ENCODE measurements at regions of chr19 and their contacts with region 1.

Region 1: DNA sequence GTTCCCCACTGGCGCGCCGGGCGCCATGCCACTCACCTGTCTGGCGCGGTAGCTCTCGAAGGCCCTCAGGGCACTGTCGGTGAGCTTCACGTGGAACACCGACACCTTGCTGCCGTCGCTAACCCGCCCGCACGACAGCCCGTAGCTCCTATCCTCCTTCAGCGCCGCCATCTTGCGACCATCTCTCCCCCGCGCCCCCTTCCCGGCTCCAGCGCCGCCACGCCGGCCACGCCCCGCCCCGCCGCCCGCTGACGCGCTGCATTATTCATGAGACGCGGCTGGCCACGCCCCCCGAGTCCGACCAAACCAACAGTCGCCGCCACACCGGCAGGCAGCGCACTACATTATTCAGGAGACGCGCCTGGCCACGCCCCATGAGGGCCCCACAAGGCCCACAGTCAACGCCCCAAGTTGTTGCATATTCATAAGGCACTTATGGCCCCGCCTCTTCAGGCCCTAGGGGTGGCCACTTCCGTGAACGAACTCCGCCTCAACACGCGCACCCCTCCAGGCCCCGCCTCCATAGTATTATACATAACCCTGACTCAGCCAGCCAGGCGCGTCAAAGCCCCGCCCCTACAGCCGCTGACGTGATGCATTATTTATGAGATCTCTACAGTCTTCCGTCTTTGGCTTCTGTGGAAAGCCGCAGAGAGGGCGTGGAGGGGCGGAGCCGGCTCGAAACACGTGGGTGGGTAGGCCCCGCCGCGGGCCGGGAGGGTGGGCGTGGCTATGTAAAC is at the start of gene ELL:
- DNase-seq: peak; percentile 100
- H3K4me3 ChIP-seq: peak within 1 kb of the TSS; percentile 69 to 97 (median 96)
- H3K27ac ChIP-seq: peak within 1 kb of the TSS; percentile 92
- H3K4me1 ChIP-seq: peaks cover 24% of the 10 kb centered on the region
- H3K27me3 ChIP-seq: no peaks in the 10 kb centered on the region
- CTCF ChIP-seq: peak in 1 of 2 donors; percentile 26
- total RNA-seq, gene ELL: 17.3 to 27.7 TPM

Region 2: DNA sequence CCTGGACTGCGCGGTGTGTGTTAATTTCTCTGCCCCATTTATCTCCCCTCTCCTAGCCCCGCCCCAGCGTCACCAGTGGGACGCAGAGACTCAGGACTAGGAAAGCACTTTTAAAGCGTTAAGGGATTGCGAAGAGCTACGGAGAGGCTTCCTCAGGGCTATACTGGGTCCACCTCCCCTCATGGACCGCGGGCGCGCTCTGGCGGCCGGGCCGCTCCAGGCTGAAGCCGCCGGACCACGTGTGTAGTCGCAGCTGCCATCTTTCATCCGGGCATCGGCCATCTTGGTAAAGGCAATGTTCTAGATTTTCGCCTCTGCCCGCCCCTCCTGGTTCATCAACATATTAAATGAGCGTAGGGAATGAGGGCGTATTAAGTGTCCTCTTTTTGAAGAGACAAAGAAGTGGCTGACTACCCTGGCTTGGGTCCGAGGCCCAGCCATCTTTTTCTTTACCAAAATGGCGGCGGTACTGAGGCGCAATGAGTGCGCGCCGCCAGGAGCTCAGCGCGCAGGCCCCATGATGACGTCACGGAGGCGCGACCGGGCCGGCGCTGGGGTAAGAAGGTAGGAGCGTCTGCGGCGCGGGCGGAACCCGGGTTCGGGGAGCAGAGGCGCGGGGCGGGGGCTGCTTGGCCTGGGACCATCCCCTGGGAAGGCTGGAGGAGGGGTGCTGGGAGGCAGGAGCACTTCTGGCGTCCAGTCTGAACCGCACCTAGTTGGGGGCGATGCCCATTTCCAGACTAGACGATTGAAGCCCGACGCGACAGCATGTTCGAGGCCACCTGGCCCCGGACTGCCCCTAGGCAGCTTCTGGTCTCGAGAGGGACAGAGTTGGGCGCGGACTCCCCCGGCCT is 589.3 kb before region 1 on chr19 and contains the start of gene CCDC124:
- CTCF ChIA-PET with region 1: no interaction called
- dilution Hi-C with region 1: no loop called
- in situ Hi-C with region 1: no loop called
- intact Hi-C with region 1: loop called (anchors 10 kb)
- DNase-seq: peak; percentile 90
- H3K4me3 ChIP-seq: peak within 1 kb of the TSS; percentile 92 to 96 (median 94)
- H3K27ac ChIP-seq: peak within 1 kb of the TSS; percentile 95
- H3K4me1 ChIP-seq: peaks cover 18% of the 10 kb centered on the region
- H3K27me3 ChIP-seq: no peaks in the 10 kb centered on the region
- CTCF ChIP-seq: peak; percentile 92 to 99
- total RNA-seq, gene CCDC124: 20.3 to 100 TPM

Region 3: DNA sequence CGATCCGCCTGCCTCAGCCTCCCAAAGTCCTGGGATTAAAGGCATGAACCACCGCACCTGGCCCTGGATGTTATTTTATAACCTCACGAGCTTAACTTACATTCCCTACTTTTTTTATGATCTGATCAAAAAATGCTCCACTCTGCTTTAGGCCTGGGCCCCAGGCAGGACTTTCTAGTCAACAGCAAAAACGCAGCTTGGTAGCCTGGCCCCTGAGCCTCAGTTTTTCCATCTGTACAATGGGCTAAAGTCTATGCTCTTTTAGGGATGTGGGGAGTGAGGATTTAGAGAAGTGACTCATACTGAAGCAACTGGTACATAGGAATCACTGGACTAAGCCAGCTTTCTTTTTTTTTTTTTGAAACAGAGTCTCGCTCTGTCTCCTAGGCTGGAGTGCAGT is 381.0 kb before region 1 on chr19:
- CTCF ChIA-PET with region 1: no interaction called
- dilution Hi-C with region 1: no loop called
- in situ Hi-C with region 1: no loop called
- intact Hi-C with region 1: no loop called
- DNase-seq: no peak
- H3K4me3 ChIP-seq: no peak overlapping the region
- H3K27ac ChIP-seq: no peak overlapping the region
- H3K4me1 ChIP-seq: no peaks in the 10 kb centered on the region
- H3K27me3 ChIP-seq: no peaks in the 10 kb centered on the region
- CTCF ChIP-seq: no peak

Region 4: DNA sequence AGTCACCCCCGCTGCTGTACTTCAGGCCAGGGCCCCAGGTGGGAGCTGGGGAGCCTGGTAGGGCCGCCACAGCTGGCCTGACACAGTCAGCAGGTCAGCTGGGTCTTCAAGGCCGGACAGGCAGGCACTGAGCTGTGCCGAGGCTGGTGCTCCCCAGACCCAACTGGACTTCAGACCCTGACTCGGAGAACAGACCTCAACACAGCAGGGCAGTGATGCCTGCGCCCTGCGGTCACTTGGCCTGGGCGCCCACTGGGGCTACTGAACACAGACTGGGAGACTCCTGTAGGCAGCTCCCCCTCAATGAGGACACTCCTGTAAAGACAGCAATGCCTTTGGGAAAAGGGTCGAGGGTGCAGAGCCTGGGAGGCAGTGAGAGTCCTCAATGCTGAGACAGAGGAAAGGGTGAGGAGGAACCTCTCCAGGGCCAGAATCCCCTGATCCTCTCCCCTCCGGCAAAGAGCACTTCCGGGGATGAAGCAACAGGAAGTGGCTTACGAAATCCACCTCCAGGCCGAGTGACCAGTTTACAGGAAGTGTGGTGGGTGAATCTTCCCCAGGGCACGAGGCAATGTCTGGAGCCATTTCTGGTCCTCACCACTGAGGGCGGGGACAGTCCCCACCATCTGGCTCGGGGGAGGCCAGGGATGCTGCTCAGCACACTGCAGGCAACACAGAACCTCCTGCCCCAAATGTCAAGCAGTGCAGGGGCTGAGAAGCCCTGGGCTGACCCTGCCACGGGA is 43.3 kb before region 1 on chr19:
- CTCF ChIA-PET with region 1: interaction called, 3 read pairs
- dilution Hi-C with region 1: no loop called
- in situ Hi-C with region 1: no loop called
- intact Hi-C with region 1: loop called (anchors 5 kb)
- DNase-seq: peak; percentile 74
- H3K4me3 ChIP-seq: no peak overlapping the region
- H3K27ac ChIP-seq: peak overlapping the region; percentile 21
- H3K4me1 ChIP-seq: peaks cover 45% of the 10 kb centered on the region
- H3K27me3 ChIP-seq: no peaks in the 10 kb centered on the region
- CTCF ChIP-seq: no peak

Region 5: GRCh38 chr19:18503971-18504885 is 17.8 kb before region 1 on chr19:
- CTCF ChIA-PET with region 1: no interaction called
- dilution Hi-C with region 1: no loop called
- in situ Hi-C with region 1: no loop called
- intact Hi-C with region 1: loop called (anchors 2 kb)
- DNase-seq: no peak
- H3K4me3 ChIP-seq: no peak overlapping the region
- H3K27ac ChIP-seq: no peak overlapping the region
- H3K4me1 ChIP-seq: peaks cover 35% of the 10 kb centered on the region
- H3K27me3 ChIP-seq: no peaks in the 10 kb centered on the region
- CTCF ChIP-seq: no peak

Region 6: DNA sequence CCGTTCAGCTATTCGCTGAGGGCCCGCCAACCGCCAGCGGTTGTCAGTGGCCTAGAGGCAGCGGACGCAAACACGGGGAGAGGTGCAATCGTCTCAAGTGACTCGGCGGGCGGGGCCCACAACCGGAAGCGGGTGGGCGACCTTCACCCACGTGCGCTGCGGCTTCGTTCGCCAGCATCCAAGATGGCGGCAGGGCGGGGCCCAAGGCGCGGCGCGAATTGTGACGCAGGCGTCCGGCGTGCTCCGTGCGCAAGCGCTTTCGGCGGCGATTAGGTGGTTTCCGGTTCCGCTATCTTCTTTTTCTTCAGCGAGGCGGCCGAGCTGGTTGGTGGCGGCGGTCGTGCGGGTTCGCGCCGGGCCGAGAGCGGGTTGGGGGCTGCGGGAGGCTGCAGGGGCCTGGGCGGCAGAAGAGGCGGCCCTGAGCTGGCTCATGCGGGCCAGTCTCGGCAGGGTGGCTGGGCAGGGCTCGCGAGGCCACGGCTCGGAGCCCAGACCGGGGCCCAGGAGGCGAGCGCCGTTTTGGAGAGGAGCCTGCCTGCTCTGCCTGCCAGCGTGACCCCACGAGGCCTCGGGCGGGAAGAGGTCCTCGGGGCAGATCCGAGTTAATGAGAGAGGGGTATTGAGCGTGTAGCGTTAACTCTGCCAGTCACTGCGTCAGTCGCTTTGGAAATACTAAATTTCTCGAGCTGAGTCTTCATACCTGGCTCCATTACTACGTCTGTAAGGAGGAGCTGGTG is 49.7 kb after region 1 on chr19 and contains the start of gene UBA52:
- CTCF ChIA-PET with region 1: no interaction called
- dilution Hi-C with region 1: no loop called
- in situ Hi-C with region 1: no loop called
- intact Hi-C with region 1: loop called (anchors 1 kb)
- DNase-seq: peak; percentile 98
- H3K4me3 ChIP-seq: peak within 1 kb of the TSS; percentile 72 to 90 (median 89)
- H3K27ac ChIP-seq: peak within 1 kb of the TSS; percentile 85
- H3K4me1 ChIP-seq: peaks cover 14% of the 10 kb centered on the region
- H3K27me3 ChIP-seq: no peaks in the 10 kb centered on the region
- CTCF ChIP-seq: no peak
- total RNA-seq, gene UBA52: 698 to 1,133 TPM